Mammary epithelial cell (primary cell): ENCODE measurements at regions of chr6 and their contacts with region 1.

Region 1: DNA sequence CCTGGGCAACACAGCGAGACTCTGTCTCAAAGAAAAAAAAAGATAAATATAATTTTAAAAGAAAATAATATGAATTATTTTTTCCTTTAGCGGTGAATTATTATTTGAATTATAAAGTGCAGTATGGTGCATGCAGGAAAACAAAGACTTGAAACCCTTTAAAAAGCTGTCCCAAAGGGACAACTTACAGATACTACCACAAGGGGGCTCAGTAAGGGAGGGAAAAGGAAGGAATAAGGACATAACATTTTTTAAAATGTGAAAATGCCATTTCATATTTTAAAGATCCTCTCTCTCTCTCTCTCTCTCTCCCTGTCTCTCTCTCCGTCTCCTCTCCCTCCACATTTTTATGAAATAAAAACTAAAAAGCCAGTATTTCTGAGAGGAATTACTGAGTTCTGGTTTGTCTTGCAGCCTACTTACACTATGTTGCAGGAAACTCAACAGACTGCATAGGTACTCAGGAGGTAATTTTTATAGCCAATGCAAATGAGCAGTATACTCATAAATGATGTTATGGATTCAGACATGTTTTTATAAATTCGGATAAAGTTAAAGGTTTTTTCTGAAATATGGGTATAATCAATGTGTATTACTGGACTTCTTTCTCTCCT is 455.0 kb upstream of the GJE1 start:
- DNase-seq: peak; percentile 13
- H3K4me3 ChIP-seq: no peak overlapping the region
- H3K27ac ChIP-seq: no peak overlapping the region
- H3K4me1 ChIP-seq: no peaks in the 10 kb centered on the region
- H3K27me3 ChIP-seq: peaks cover 2% of the 10 kb centered on the region
- CTCF ChIP-seq: peak; percentile 58 to 73

Region 2: GRCh38 chr6:141610736-141611135 is 67.0 kb before region 1 on chr6:
- CTCF ChIA-PET with region 1: no interaction called
- dilution Hi-C with region 1: no loop called
- in situ Hi-C with region 1: no loop called
- intact Hi-C with region 1: loop called (anchors 2 kb)
- DNase-seq: peak; percentile 19
- H3K4me3 ChIP-seq: no peak overlapping the region
- H3K27ac ChIP-seq: no peak overlapping the region
- H3K4me1 ChIP-seq: no peaks in the 10 kb centered on the region
- H3K27me3 ChIP-seq: no peaks in the 10 kb centered on the region
- CTCF ChIP-seq: peak; percentile 43 to 60